Activated T-helper 1 cell treated with anti-CD3 and anti-CD28 coated beads, Interleukin-12 subunit alpha, Interleukin-12 subunit beta, Interleukin-2, Interleukin-4 antibody, amounts not matched to agents 30 ng/mL and 10 ng/mL and 1 ng/mL, durations not matched to agents 14 hours and 24 hours and 36 hours (primary cell): ENCODE measurements at regions of chr10 and their contacts with region 1.

Region 1: DNA sequence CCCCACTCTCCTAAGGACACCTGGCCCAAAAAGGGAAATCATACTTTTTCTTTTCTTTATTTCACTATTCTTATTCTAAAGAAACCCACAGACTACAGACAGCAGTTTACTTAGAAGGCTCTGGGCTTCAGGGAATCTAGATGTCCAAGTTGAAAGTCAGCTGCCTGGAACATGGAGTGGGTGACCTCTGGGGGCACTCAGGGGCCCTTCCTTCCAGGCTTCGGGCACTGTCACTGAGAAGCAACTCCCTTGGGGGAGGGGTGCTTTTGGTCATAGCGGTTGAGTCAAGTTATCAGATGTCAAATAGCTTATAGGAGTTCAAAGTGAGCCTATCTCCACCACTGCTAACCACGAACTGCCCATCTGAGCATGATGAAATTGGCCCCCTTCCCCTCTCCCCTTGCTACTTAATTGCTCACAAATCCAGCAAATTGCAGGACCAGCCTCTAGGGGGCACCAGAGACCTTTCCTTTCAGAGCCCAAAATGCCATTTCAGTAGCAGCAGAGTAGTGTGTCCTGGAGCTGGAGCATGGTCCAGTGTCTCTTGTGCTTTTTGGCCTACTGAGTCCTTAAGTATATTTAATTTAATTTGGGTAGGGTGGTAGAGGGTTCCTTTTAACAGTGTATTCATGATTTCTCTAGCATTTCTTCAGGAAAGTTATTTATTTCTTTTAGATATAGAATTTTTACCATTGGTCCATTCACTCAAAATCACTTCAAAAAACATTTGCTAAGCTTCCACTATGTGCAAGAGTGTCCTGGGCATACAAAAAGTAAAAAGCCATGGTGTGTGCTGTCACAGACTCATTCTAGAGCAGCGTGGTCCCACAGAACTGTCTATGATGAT is 463.8 kb downstream of the KCNMA1 start:
- DNase-seq: peak; percentile 40
- H3K4me3 Mint-ChIP-seq: no peak overlapping the region
- H3K27ac Mint-ChIP-seq: no peak overlapping the region
- H3K4me1 Mint-ChIP-seq: no peaks in the 10 kb centered on the region
- H3K27me3 Mint-ChIP-seq: no peaks in the 10 kb centered on the region

Region 2: GRCh38 chr10:77405771-77406241 is 232.0 kb after region 1 on chr10:
- intact Hi-C with region 1: loop called (anchors 10 kb)
- DNase-seq: no peak
- H3K4me3 Mint-ChIP-seq: no peak overlapping the region
- H3K27ac Mint-ChIP-seq: no peak overlapping the region
- H3K4me1 Mint-ChIP-seq: no peaks in the 10 kb centered on the region
- H3K27me3 Mint-ChIP-seq: no peaks in the 10 kb centered on the region

Region 3: DNA sequence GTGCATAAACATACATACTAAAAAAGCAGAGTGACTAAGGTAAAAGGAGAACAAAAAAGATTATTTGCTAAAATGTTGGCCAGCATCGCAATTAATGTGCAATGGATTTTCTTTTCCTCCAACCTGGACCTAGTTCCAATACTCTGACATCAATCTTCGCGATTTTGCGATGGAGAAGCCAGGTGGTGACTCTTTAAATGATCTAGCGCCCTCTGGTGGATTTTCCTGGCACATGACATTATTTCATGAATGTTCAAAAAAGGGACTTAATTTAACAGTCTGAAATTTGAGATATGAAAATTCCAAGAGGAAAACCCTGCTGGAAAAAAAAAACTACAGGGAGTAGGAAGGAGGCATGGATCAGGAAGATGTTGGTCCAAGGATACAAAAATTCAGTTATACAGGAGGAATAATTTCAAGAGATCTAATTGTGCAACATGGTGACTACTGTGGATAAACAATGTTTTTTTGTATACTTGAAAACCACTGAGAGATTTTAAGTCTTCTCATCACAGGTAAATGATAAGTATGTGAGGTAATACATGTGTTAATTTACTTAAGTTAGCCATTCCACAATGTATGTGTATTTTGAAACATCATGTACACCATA is 468.1 kb after region 1 on chr10:
- intact Hi-C with region 1: loop called (anchors 1 kb)
- DNase-seq: peak; percentile 22
- H3K4me3 Mint-ChIP-seq: no peak overlapping the region
- H3K27ac Mint-ChIP-seq: no peak overlapping the region
- H3K4me1 Mint-ChIP-seq: no peaks in the 10 kb centered on the region
- H3K27me3 Mint-ChIP-seq: peaks cover 18% of the 10 kb centered on the region

Region 4: GRCh38 chr10:77710759-77711682 is 537.2 kb after region 1 on chr10:
- intact Hi-C with region 1: loop called (anchors 1 kb)
- DNase-seq: peak; percentile 59
- H3K4me3 Mint-ChIP-seq: peak overlapping the region; percentile 30
- H3K27ac Mint-ChIP-seq: no peak overlapping the region
- H3K4me1 Mint-ChIP-seq: peaks cover 5% of the 10 kb centered on the region
- H3K27me3 Mint-ChIP-seq: peaks cover 32% of the 10 kb centered on the region